ENCODE measurements at regions of chr14 and their contacts with region 1.

Region 1: GRCh38 chr14:24734878-24735500 is 101.0 kb upstream of the GZMB start:
- DNase-seq: no peak
- ATAC-seq: peak; percentile 68

Region 2: GRCh38 chr14:24678801-24679247 is 56.2 kb before region 1 on chr14:
- intact Hi-C with region 1: no loop called
- DNase-seq: peak; percentile 67
- ATAC-seq: peak; percentile 81

Region 3: GRCh38 chr14:24806061-24806678 is 71.2 kb after region 1 on chr14:
- intact Hi-C with region 1: loop called (anchors 5 kb)
- DNase-seq: no peak
- ATAC-seq: peak; percentile 67

Region 4: DNA sequence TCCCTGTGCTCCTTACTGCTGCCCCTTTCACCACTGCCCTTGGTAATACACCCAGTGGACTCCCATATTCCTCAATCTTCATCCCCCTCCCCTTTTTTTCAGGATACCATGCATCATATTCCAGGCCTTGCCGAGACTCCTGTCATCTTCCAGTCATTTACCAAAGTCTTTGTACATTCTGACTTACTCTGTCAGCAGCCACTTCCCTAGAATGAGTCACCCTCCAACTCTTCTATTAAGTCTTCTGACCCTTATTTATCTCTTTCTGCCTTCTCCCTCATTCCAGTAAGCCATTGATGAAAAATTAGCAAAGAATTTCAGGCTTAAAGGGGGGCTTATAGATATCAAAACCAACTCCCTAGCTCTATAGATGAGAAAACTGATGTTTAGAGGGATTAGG is 186.9 kb after region 1 on chr14:
- intact Hi-C with region 1: no loop called
- DNase-seq: no peak
- ATAC-seq: no peak

Region 5: GRCh38 chr14:25042362-25043299 is 307.6 kb after region 1 on chr14:
- intact Hi-C with region 1: loop called (anchors 5 kb)
- DNase-seq: no peak
- ATAC-seq: peak; percentile 32

Region 6: DNA sequence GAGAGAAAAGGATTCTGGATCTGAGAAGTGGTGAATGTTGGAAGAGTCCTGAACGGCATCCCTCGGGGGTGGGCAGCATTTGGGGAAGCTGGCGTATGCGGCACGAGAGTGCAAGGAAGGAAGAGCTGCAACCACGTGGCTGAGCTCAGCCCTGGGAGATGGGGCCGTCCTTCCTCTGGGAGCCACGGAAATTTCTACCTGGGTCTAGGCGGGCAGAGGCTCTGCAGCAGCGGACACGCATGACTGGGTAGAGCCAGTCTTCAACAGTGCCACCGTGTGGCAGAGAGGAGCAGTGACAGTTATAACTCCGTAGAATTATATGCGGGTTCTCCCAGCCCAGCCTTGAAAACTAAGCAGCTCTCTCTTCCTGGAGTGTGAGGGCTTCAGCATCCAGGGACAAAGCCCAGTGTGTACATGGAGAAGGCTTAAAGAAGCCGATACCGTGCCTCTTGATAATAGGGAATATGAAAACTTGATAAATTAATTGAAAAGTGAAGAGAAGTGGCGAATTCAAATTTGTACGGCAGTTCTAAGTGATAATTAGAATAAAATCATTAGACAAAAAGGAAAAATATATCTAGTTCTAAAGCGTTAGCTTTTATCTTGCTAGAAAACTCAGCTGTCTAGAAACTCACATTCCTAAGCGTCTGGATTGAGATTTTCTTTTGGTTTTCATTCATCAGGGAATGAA is 397.9 kb after region 1 on chr14:
- intact Hi-C with region 1: loop called (anchors 5 kb)
- DNase-seq: peak; percentile 76
- ATAC-seq: peak; percentile 98

Region 7: GRCh38 chr14:25150934-25151790 is 416.2 kb after region 1 on chr14:
- intact Hi-C with region 1: loop called (anchors 2 kb)
- DNase-seq: no peak
- ATAC-seq: no peak

Region 8: DNA sequence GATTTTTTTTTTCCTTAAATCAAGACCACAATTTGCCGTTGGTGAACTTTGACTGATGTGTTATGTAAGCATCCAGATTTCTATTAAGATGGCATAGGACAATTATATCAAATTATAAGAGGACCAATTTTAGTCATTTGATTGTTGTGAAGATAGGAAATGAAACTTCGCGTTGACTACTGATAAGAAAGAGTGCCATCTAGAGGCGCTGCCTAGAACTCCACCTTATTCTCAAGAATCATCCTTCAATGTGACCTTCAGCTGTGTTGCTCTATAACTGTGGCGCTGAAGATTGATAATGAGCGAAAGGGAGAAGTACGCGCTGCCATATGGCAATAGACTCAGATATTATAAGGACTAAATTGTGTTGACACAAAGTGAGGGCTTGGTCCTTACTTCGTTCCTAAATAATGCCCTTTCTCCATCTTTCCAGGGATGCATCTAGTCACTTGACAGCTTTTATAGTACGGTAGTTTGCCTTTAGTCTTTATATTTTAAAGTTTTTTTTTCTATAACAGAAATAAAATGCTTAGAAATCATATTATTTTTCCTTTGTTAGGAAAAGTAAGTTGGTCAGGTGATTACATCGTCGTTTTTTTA is 665.7 kb after region 1 on chr14:
- intact Hi-C with region 1: loop called (anchors 10 kb)
- DNase-seq: no peak
- ATAC-seq: no peak